Adrenal gland (tissue), 19 donors: ENCODE measurements at regions of chr19 and their contacts with region 1.

Region 1: DNA sequence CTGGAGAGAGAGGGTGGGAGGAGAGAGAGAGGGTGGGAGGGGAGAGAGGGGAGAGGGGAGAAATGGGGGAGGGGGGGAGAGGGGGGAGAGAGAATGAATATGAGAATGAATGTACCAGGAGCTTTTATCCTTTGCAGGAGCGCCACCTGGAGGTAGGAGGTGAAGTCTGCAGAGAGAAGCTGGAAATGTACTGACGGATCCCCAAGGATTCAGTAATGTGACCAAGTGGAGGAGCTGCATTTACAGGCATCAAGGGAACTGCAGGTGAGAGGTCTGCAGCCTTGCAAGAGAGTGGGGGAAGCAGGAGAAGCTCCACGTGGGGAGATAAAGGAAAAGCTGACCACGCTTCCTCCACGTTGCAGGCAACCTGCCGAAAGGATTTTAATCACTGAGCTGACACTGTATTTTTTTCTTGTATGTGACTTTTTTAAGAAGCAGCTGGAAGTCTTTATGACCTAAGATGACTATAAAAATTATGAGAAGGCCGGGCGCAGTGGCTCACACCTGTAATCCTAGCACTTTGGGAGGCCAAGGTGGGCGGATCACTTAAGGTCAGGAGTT is 33.7 kb downstream of the VSTM1 start:
- DNase-seq: peak; percentile 36 to 78 (median 57)
- H3K4me3 ChIP-seq: no peak overlapping the region
- H3K27ac ChIP-seq: no peak overlapping the region
- H3K4me1 ChIP-seq: no peaks in the 10 kb centered on the region
- H3K27me3 ChIP-seq: peaks cover 8% of the 10 kb centered on the region
- CTCF ChIP-seq: peak; percentile 23 to 59 (median 48)
- POLR2A ChIP-seq: no peak

Region 2: GRCh38 chr19:53849237-53849676 is 180.8 kb before region 1 on chr19:
- intact Hi-C with region 1: loop called (anchors 5 to 10 kb)
- DNase-seq: no peak
- H3K4me3 ChIP-seq: no peak overlapping the region
- H3K27ac ChIP-seq: no peak overlapping the region
- H3K4me1 ChIP-seq: no peaks in the 10 kb centered on the region
- H3K27me3 ChIP-seq: no peaks in the 10 kb centered on the region
- CTCF ChIP-seq: no peak
- POLR2A ChIP-seq: no peak

Region 3: DNA sequence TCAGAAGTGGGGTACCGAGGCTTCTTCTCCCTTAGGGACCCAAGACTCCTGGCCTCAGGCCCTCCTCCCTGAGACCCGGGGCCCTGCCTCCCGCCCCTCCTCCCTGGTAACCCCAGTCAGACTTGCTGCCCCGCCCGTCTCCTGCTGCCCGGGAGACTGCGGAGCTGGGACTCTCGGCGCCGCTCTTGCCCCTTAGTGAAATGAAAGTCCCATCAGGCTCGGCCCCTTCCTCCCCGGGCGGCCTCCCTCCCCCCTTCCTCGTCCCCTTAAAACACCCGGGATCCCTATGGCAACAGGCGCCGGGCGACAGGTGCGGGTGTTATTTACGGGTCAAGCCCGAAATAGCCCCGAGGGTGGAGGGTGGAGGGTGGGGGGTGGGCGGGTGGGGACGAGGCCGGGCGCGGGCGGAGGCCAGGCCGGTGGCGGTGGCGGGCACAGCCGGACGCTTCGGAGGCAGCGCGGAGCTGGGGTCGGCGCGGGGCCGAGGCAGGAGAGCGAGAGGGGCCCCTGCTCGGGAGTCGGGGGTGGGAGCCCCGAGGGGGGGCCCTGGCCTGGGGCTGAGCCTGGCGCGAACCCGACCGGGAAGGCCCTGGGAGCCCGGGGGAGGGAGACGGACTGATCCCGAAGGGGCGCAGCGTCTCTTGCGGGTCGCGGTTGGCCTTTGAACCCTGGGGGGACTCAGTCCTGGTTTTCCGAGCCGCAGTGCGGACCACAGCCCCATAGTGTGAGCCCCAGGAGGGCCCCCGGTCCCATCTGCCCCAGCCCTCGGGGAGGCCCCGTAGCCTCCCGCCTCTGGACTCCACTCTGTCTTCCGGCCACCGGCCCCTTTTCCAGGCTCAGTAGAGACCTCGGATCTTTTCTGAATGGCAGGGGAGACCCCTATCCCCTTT is 38.5 kb before region 1 on chr19 and contains the start of gene CACNG6:
- intact Hi-C with region 1: no loop called
- DNase-seq: no peak
- H3K4me3 ChIP-seq: peak within 1 kb of the TSS in 1 of 4 donors; percentile 36
- H3K27ac ChIP-seq: no peak within 1 kb of the TSS
- H3K4me1 ChIP-seq: peaks cover 0 to 4% of the 10 kb centered on the region in 2 donors
- H3K27me3 ChIP-seq: peaks cover 18% of the 10 kb centered on the region
- CTCF ChIP-seq: no peak
- POLR2A ChIP-seq: no peak
- total RNA-seq, gene CACNG6: not detected

Region 4: DNA sequence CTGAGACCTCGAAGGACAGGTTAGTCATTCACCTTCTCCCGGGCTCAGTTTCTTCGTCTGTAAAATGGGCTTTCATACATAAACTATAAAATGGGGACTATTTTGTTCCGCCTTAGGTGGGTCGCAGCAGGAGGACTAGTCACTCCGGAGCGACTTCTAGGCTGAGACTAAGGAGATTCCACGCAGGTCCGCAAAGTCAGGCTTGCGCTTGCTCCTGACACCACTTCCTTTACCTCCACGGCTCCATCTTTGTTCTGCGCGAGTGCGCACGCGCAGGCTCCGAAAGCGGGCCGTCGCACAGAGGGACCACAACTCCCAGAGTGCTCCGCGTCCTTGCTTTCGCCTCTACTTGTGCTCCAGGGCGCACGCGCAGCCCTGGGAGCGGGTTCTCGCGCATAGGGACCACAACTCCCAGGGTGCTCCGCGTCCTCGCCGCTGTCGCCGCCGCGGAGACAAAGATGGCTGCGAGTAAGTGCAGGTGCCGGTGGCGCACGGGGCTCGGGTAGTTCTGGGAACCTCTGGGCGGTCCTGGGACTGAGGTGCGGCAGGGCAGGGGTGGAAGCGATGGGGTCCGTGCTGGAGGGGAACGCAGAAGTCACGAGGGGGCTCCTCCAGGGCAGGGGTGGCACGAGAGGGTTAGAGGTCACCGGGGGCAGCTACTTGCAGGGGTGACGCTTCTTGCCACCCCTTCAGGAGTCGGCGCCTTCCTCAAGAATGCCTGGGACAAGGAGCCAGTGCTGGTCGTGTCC is 72.6 kb after region 1 on chr19 and contains the start of gene NDUFA3:
- intact Hi-C with region 1: no loop called
- DNase-seq: peak; percentile 97 to 99 (median 98)
- H3K4me3 ChIP-seq: peak within 1 kb of the TSS; percentile 10 to 89 (median 82)
- H3K27ac ChIP-seq: peak within 1 kb of the TSS in 3 of 5 donors; percentile 20 to 74 (median 56)
- H3K4me1 ChIP-seq: peaks cover 0 to 11% of the 10 kb centered on the region in 2 donors
- H3K27me3 ChIP-seq: no peaks in the 10 kb centered on the region
- CTCF ChIP-seq: no peak
- POLR2A ChIP-seq: no peak
- total RNA-seq, gene NDUFA3: 33.2 to 257 (median 150) TPM

Region 5: DNA sequence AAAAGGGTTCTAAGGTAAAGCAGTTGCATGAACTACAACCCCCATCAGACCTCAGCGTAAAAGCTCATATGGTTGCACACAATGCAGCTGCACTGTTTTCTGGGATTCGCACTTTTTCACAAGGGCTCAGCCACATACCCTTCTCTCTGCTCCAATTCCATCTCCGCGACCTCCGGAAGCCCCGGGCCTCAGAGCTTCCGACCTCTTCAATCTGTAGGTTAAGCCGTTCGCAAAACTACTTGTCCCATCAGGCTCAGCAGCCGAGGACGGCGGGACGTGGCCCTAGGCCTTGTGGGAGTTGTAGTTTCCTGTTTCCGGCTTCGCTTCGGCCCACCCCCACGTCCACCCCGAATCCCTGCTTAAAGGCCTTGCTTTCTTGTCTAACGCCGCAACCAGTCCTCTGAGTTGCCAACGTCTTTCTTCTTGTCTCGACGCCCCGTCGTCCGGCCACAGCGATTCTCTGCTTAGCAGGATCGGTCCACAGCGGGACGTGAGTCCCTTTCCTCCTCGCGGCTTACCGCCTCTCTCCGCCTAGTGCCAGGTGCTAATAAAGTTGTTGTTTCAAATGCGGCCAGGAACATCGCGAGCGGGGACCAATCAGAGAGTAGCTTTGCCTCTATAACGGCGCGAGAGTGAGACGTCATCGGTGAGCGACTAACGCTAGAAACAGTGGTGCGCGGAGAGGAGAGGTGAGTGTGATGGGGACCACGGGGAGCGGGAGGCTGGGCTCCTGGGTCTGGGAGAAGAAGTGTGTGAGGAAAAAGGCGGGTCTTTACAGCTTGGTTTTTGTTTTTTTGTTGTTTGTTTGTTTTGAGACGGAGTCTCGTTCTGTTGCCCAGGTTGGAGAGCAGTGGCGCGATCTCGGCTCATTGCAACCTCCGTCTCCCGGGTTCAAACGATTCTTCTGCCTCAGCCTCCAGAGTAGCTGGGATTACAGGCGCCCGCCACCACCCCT is 85.4 kb after region 1 on chr19 and contains the starts of genes PRPF31 and TFPT:
- intact Hi-C with region 1: no loop called
- DNase-seq: peak; percentile 95 to 99 (median 98)
- H3K4me3 ChIP-seq: peak within 1 kb of the TSS; percentile 52 to 81 (median 72)
- H3K27ac ChIP-seq: peak within 1 kb of the TSS; percentile 73 to 94 (median 84)
- H3K4me1 ChIP-seq: peaks cover 22 to 23% of the 10 kb centered on the region in 2 donors
- H3K27me3 ChIP-seq: no peaks in the 10 kb centered on the region
- CTCF ChIP-seq: no peak
- POLR2A ChIP-seq: peak; percentile 57 to 62
- total RNA-seq, gene PRPF31: 36.1 to 72.5 (median 49.5) TPM
- total RNA-seq, gene TFPT: 19.5 to 28.0 (median 24.1) TPM

Region 6: DNA sequence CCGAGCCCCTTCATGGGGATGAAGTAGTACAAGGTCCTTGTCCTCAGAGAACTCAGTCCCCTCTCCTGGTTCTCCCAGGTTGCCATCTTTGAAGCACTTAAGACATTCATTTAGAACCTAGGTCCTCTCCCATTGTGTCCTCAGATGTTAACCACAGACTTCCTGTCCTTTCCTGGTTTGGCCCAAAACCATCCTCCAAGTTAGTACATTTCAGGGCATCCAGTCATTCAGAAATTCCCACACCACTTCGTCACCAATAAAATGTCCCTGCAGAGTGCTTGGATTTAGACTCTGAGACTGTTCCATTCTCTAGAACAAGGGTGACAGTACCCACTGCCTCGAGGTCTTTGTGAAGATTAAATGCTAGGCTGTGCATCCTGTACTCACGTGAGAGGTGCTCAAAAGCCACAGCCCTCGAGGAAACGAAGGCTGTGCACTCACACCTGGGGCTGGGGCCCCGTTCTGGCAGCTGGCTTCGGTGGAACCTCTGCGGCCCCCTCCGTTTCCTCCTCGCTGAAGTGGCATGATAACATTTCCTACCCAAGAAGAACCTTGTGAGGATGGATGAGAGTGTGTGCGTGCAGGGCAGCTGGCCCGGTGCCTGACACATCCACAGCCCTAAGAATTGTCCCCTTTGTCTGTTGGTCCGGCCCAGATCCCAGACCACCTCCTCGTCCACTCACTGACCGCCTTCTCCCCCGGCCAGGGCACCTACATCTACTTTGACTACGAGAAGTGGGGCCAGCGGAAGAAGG is 124.8 kb after region 1 on chr19:
- intact Hi-C with region 1: no loop called
- DNase-seq: no peak
- H3K4me3 ChIP-seq: no peak overlapping the region
- H3K27ac ChIP-seq: peak overlapping the region in 2 of 5 donors; percentile 3 to 6
- H3K4me1 ChIP-seq: peaks cover 8 to 13% of the 10 kb centered on the region in 2 donors
- H3K27me3 ChIP-seq: no peaks in the 10 kb centered on the region
- CTCF ChIP-seq: no peak
- POLR2A ChIP-seq: no peak